Body of pancreas (tissue), 4 donors: ENCODE measurements at regions of chr13 and their contacts with region 1.

Region 1: GRCh38 chr13:94617389-94618000 is 15.8 kb downstream of the GPR180 start:
- DNase-seq: peak in 1 of 4 donors; percentile 21
- ATAC-seq: peak; percentile 59
- H3K4me3 ChIP-seq: no peak overlapping the region
- H3K27ac ChIP-seq: no peak overlapping the region
- H3K4me1 ChIP-seq: no peaks in the 10 kb centered on the region
- H3K27me3 ChIP-seq: no peaks in the 10 kb centered on the region
- CTCF ChIP-seq: peak; percentile 39 to 76 (median 68)
- POLR2A ChIP-seq: no peak

Region 2: GRCh38 chr13:94433055-94433961 is 184.2 kb before region 1 on chr13:
- intact Hi-C with region 1: loop called (anchors 5 kb)
- DNase-seq: no peak
- ATAC-seq: no peak
- H3K4me3 ChIP-seq: no peak overlapping the region
- H3K27ac ChIP-seq: no peak overlapping the region
- H3K4me1 ChIP-seq: no peaks in the 10 kb centered on the region
- H3K27me3 ChIP-seq: no peaks in the 10 kb centered on the region
- CTCF ChIP-seq: no peak
- POLR2A ChIP-seq: no peak